ENCODE measurements at regions of chr19 and their contacts with region 1.

Region 1: DNA sequence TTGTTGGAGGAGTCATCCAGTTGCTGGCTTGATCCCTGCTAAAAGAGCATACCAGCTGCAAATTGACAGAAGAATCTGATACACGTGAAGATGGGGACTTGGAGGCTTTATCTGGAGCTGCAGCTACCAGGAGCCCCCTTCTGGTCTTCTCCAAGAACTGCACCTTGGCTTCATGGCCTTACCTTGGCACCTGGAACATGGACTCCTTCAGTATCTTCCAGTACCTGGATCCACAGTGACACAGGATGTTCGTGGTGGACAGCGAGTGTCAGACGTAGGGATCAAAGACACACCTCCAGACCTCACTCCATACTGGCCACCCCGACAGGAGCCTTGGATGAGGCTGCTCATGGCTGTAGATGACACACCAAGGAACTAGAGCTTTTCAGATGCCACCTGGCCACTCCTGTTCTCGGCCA is 9.9 kb upstream of the ACSBG2 start:
- DNase-seq: peak; percentile 77
- ATAC-seq: peak; percentile 78
- H3K4me3 ChIP-seq: no peak overlapping the region
- H3K27ac ChIP-seq: no peak overlapping the region
- H3K4me1 ChIP-seq: no peaks in the 10 kb centered on the region
- H3K27me3 ChIP-seq: no peaks in the 10 kb centered on the region
- CTCF ChIP-seq: peak; percentile 88
- POLR2A ChIP-seq: no peak
- RAD21 ChIP-seq: peak; percentile 98

Region 2: DNA sequence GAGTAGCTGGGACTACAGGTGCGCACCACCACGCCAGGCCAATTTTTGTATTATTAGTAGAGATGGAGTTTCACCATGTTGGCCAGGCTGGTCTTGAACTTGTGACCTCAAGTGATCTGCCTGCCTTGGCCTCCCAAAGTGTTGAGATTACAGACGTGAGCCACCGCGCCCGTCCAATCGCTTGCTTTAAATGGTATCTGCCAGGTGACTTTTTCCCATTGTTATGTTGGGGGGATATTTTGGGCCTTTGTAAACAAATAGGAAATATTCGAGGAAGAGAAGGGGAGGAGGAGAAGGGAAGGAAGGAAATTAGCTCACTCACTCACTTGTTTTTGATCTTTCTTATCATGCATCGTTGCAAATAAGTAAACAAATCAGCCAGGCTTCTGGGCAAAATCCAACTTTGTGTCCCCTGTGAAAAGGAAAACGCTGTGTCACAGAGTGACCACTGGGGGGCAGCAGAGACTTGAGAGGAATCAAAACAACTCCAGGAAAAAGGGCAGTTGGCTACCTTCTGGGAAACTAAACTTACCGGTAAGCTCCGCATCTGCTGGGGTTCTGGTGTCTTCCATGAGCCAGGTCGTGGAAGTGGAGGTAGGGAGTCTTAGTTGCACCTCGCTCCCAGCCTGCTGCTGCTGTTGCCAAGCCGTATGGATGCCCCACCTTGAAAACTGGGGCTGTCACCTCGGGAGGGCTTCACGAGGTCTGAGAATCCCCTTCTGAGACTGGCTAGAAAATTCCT is 138.3 kb before region 1 on chr19:
- CTCF ChIA-PET with region 1: interaction called, 3 read pairs
- POLR2A ChIA-PET with region 1: no interaction called
- dilution Hi-C with region 1: no loop called
- in situ Hi-C with region 1: loop called (anchors 10 kb)
- intact Hi-C with region 1: loop called (anchors 1 kb)
- DNase-seq: peak; percentile 77
- ATAC-seq: peak; percentile 70
- H3K4me3 ChIP-seq: no peak overlapping the region
- H3K27ac ChIP-seq: no peak overlapping the region
- H3K4me1 ChIP-seq: peaks cover 19% of the 10 kb centered on the region
- H3K27me3 ChIP-seq: no peaks in the 10 kb centered on the region
- CTCF ChIP-seq: peak; percentile 92
- POLR2A ChIP-seq: no peak
- RAD21 ChIP-seq: peak; percentile 81

Region 3: GRCh38 chr19:6056801-6057650 is 68.6 kb before region 1 on chr19:
- CTCF ChIA-PET with region 1: interaction called, 10 read pairs
- POLR2A ChIA-PET with region 1: no interaction called
- dilution Hi-C with region 1: no loop called
- in situ Hi-C with region 1: no loop called
- intact Hi-C with region 1: loop called (anchors 2 kb)
- DNase-seq: peak; percentile 91
- ATAC-seq: peak; percentile 83
- H3K4me3 ChIP-seq: no peak overlapping the region
- H3K27ac ChIP-seq: peak overlapping the region; percentile 66
- H3K4me1 ChIP-seq: peaks cover 16% of the 10 kb centered on the region
- H3K27me3 ChIP-seq: no peaks in the 10 kb centered on the region
- CTCF ChIP-seq: no peak
- POLR2A ChIP-seq: peak; percentile 54
- RAD21 ChIP-seq: peak; percentile 42

Region 4: GRCh38 chr19:6086068-6086788 is 39.4 kb before region 1 on chr19:
- CTCF ChIA-PET with region 1: no interaction called
- POLR2A ChIA-PET with region 1: no interaction called
- dilution Hi-C with region 1: no loop called
- in situ Hi-C with region 1: no loop called
- intact Hi-C with region 1: no loop called
- DNase-seq: peak; percentile 71
- ATAC-seq: peak; percentile 12
- H3K4me3 ChIP-seq: no peak overlapping the region
- H3K27ac ChIP-seq: no peak overlapping the region
- H3K4me1 ChIP-seq: peaks cover 23% of the 10 kb centered on the region
- H3K27me3 ChIP-seq: no peaks in the 10 kb centered on the region
- CTCF ChIP-seq: no peak
- POLR2A ChIP-seq: no peak
- RAD21 ChIP-seq: no peak

Region 5: DNA sequence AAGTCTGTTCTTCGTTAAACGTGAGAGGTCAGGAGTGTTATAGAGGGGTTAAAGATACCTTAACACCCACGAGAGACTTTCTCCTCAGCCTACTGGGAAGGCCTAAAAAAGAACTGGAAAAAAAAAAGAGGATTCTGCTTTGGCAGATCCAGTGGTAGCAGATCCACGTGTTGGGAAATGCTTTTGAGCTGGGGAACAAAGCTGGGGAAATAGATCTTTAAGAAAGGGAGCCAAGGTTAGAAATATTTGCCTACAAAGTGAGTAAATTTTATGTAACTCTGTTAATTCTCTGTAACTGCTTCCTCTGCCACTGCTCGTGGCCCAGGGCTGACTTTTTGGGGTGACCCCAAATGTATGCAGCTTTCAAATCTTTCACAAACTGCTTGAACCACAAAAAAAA is 27.0 kb before region 1 on chr19:
- CTCF ChIA-PET with region 1: no interaction called
- POLR2A ChIA-PET with region 1: no interaction called
- dilution Hi-C with region 1: no loop called
- in situ Hi-C with region 1: no loop called
- intact Hi-C with region 1: no loop called
- DNase-seq: no peak
- ATAC-seq: no peak
- H3K4me3 ChIP-seq: no peak overlapping the region
- H3K27ac ChIP-seq: no peak overlapping the region
- H3K4me1 ChIP-seq: peaks cover 8% of the 10 kb centered on the region
- H3K27me3 ChIP-seq: no peaks in the 10 kb centered on the region
- CTCF ChIP-seq: no peak
- POLR2A ChIP-seq: no peak
- RAD21 ChIP-seq: no peak

Region 6: GRCh38 chr19:6259312-6259861 is 133.8 kb after region 1 on chr19:
- CTCF ChIA-PET with region 1: no interaction called
- POLR2A ChIA-PET with region 1: no interaction called
- dilution Hi-C with region 1: no loop called
- in situ Hi-C with region 1: no loop called
- intact Hi-C with region 1: no loop called
- DNase-seq: peak; percentile 75
- ATAC-seq: peak; percentile 82
- H3K4me3 ChIP-seq: no peak overlapping the region
- H3K27ac ChIP-seq: peak overlapping the region; percentile 69; the same call in 1 of the 2 replicates
- H3K4me1 ChIP-seq: peaks cover 19% of the 10 kb centered on the region
- H3K27me3 ChIP-seq: no peaks in the 10 kb centered on the region
- CTCF ChIP-seq: no peak
- POLR2A ChIP-seq: no peak
- RAD21 ChIP-seq: no peak

Region 7: GRCh38 chr19:6297202-6297601 is 171.6 kb after region 1 on chr19:
- CTCF ChIA-PET with region 1: interaction called, 5 read pairs
- POLR2A ChIA-PET with region 1: no interaction called
- dilution Hi-C with region 1: no loop called
- in situ Hi-C with region 1: no loop called
- intact Hi-C with region 1: loop called (anchors 2 kb)
- DNase-seq: no peak
- ATAC-seq: no peak
- H3K4me3 ChIP-seq: no peak overlapping the region
- H3K27ac ChIP-seq: no peak overlapping the region
- H3K4me1 ChIP-seq: no peaks in the 10 kb centered on the region
- H3K27me3 ChIP-seq: no peaks in the 10 kb centered on the region; the same call in none of the 2 replicates
- CTCF ChIP-seq: no peak
- POLR2A ChIP-seq: no peak
- RAD21 ChIP-seq: no peak

Region 8: GRCh38 chr19:6632002-6632621 is 506.5 kb after region 1 on chr19:
- CTCF ChIA-PET with region 1: no interaction called
- POLR2A ChIA-PET with region 1: no interaction called
- dilution Hi-C with region 1: no loop called
- in situ Hi-C with region 1: no loop called
- intact Hi-C with region 1: loop called (anchors 5 kb)
- DNase-seq: peak; percentile 64
- ATAC-seq: peak; percentile 90
- H3K4me3 ChIP-seq: no peak overlapping the region
- H3K27ac ChIP-seq: no peak overlapping the region
- H3K4me1 ChIP-seq: no peaks in the 10 kb centered on the region
- H3K27me3 ChIP-seq: no peaks in the 10 kb centered on the region
- CTCF ChIP-seq: peak; percentile 71
- POLR2A ChIP-seq: no peak
- RAD21 ChIP-seq: peak; percentile 66